WTC11 (cell line): ENCODE measurements at regions of chr3 and their contacts with region 1.

Region 1: DNA sequence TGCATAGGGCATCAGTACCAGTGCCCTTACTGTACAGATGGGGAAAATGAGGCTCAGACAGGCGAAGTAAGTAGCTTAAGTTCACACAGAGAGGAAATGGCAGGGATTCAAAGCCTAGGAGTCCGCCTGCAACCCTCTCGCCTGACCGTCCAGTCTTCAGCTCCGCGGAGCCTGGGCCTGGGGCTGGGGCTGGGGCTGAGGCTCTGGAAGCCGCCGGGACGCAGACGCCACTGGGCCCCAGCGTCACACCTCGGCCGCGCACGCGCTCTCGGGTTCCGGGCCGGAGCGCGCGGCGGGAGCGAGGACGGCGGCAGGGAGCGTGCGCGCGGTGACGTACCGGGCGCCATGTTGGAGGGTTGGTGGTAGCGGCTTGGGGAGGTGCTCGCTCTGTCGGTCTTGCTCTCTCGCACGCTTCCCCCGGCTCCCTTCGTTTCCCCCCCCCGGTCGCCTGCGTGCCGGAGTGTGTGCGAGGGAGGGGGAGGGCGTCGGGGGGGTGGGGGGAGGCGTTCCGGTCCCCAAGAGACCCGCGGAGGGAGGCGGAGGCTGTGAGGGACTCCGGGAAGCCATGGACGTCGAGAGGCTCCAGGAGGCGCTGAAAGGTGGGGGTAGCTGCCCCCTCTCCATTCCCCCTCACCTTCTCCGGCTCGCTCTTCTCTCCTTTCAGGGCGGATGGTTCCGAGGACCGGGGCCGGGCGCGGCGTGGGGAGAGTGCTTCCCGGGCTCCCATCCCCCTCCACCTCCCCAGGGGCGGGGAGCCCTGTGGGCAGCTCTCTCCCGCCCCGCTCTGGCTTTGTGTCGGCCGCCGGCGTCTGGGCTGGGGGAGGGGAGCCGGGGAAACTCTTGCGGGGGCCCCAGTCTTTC is at the start of gene PPP4R2:
- DNase-seq: peak; percentile 85
- ATAC-seq: peak; percentile 89
- H3K4me3 Mint-ChIP-seq: peak within 1 kb of the TSS; percentile 96
- H3K27ac Mint-ChIP-seq: peak within 1 kb of the TSS; percentile 93
- H3K4me1 Mint-ChIP-seq: peaks cover 41% of the 10 kb centered on the region
- H3K27me3 Mint-ChIP-seq: no peaks in the 10 kb centered on the region
- CTCF ChIP-seq: no peak
- total RNA-seq, gene PPP4R2: 70.3 to 80.4 TPM (median 78.1 TPM) in 3 replicates

Region 2: GRCh38 chr3:73056014-73056844 is 59.5 kb after region 1 on chr3:
- CTCF ChIA-PET with region 1: interaction called, 11 read pairs
- POLR2A ChIA-PET with region 1: no interaction called
- DNase-seq: no peak
- ATAC-seq: no peak
- H3K4me3 Mint-ChIP-seq: no peak overlapping the region
- H3K27ac Mint-ChIP-seq: peak overlapping the region; percentile 63
- H3K4me1 Mint-ChIP-seq: peaks cover 39% of the 10 kb centered on the region
- H3K27me3 Mint-ChIP-seq: no peaks in the 10 kb centered on the region
- CTCF ChIP-seq: no peak

Region 3: GRCh38 chr3:73280746-73281145 is 284.0 kb after region 1 on chr3:
- CTCF ChIA-PET with region 1: no interaction called
- POLR2A ChIA-PET with region 1: no interaction called
- DNase-seq: no peak
- ATAC-seq: no peak
- H3K4me3 Mint-ChIP-seq: no peak overlapping the region
- H3K27ac Mint-ChIP-seq: no peak overlapping the region
- H3K4me1 Mint-ChIP-seq: no peaks in the 10 kb centered on the region
- H3K27me3 Mint-ChIP-seq: no peaks in the 10 kb centered on the region
- CTCF ChIP-seq: no peak